ENCODE measurements at regions of chr6 and their contacts with region 1.

Region 1: DNA sequence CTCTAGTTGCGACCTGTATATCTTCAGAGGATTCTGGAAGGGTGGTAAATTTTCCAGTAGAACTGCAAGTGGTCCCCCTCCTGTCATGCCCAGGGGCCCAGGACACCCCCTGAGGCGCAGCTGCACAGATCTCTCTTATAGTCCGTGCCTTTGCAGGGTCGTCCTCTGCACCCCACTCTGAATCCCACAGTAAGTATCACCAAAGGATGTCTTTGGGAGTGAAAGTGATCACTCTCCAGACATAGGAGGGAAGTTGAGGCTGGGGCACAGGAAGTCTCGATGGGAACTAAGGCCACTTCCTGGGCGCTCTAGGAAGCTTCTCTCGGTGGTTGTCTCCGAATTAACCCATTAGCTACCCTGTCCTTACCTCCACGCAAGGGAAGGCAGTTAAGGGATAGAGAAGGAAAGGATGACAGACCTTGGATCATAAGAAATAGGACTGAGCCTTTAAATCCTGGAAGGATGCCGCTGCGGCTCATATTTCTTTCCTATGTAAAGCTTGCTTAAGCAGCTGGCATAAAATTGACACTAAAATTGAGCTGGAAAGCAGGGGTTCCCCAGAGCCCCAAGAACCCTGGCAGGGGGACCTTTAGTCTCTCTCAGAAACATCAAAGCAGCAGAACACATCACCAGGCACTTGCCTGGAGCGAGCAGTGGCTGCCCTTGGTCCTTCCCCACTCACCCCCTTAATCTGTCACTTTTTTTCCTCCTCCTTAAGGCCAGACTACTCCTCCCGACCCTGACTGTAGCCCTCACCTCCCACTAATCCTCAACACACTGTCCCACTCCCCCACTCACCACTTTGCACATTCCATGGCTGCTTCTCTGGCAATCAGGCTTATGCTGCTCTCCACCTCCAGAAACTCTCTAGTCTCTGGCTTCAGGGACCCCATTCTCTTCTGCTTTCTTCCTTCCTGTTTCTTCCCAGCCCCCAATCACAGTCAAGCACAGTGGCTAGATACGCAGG is at the start of gene ZKSCAN4:
- DNase-seq: peak; percentile 88
- ATAC-seq: peak; percentile 94
- H3K4me3 ChIP-seq: peak within 1 kb of the TSS; percentile 85 to 98 (median 97)
- H3K27ac ChIP-seq: peak within 1 kb of the TSS; percentile 30
- H3K4me1 ChIP-seq: peaks cover 27% of the 10 kb centered on the region
- H3K27me3 ChIP-seq: no peaks in the 10 kb centered on the region; a peak in 1 of 5 replicates
- CTCF ChIP-seq: no peak
- EP300 ChIP-seq: peak in 1 of 2 experiments; percentile 56; a peak in 1 of 4 replicates
- POLR2A ChIP-seq: peak; percentile 42 to 74; a peak in 3 of 4 replicates
- RAD21 ChIP-seq: no peak; the same call in 1 of the 2 replicates
- total RNA-seq, gene ZKSCAN4: 7.8 and 10.2 TPM in 2 replicates

Region 2: GRCh38 chr6:28090917-28091586 is 161.2 kb before region 1 on chr6:
- CTCF ChIA-PET with region 1: no interaction called
- POLR2A ChIA-PET with region 1: no interaction called
- in situ Hi-C with region 1: no loop called
- intact Hi-C with region 1: no loop called
- DNase-seq: no peak
- ATAC-seq: no peak
- H3K4me3 ChIP-seq: no peak overlapping the region
- H3K27ac ChIP-seq: no peak overlapping the region
- H3K4me1 ChIP-seq: no peaks in the 10 kb centered on the region
- H3K27me3 ChIP-seq: no peaks in the 10 kb centered on the region
- CTCF ChIP-seq: no peak
- EP300 ChIP-seq: no peak
- POLR2A ChIP-seq: no peak
- RAD21 ChIP-seq: no peak

Region 3: DNA sequence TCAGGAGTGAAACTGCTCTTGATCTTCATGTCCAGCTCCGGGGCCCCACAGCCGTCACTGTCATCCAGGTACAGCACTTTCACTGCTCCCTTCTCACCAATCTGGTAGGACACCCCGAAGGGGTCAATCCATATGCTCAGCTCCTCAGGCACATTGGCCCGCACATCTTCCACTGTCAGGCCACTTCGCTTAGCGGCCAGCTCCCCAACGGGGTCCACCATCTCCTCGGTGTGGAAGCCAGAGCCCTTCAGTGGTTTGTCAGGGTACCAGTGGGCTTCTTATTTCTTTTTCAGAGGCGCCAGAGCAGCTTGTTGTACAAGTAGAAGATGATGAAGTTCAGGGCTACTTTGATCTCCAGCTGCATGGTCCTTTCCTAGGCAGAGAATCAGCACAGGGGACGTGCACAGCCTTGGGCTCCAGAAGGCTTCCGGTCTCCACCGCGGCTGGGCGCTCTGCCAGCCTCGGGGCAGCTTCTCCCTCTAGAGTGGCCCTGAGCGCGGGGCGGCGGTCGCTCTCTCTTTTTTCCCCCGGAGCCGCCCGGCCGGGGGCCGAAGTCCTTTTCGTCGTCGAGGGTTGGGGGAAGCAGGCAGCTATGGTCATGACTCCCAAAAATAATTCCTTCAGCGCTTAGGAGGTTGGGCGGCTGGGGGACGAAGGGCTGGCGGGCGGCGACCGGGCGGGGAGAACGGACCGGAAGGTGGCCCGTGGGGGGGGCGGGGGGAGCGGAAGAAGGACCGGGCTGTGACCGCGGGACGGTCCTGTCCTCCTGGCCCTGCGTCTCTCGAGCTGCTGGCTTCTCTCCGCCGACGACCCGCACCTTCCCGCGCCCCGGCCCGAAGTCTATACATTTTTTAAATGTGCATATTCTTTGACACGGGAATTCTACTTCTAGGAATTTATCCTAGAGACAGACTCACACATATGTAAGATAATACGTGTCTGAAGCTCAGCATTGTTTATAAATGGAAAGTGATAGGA is 33.7 kb before region 1 on chr6:
- CTCF ChIA-PET with region 1: no interaction called
- POLR2A ChIA-PET with region 1: interaction called, 20 read pairs
- in situ Hi-C with region 1: no loop called
- intact Hi-C with region 1: no loop called
- DNase-seq: peak; percentile 70
- ATAC-seq: peak; percentile 93
- H3K4me3 ChIP-seq: peak overlapping the region; percentile 53 to 77 (median 56)
- H3K27ac ChIP-seq: peak overlapping the region; percentile 79
- H3K4me1 ChIP-seq: peaks cover 55% of the 10 kb centered on the region
- H3K27me3 ChIP-seq: no peaks in the 10 kb centered on the region; a peak in 1 of 5 replicates
- CTCF ChIP-seq: peak; percentile 49
- EP300 ChIP-seq: no peak
- POLR2A ChIP-seq: peak; percentile 42 to 77; a peak in 2 of 4 replicates
- RAD21 ChIP-seq: peak; percentile 50

Region 4: GRCh38 chr6:28225056-28225834 is 27.0 kb before region 1 on chr6 and contains the start of gene ZSCAN9:
- CTCF ChIA-PET with region 1: no interaction called
- POLR2A ChIA-PET with region 1: interaction called, 6 read pairs
- in situ Hi-C with region 1: no loop called
- intact Hi-C with region 1: loop called (anchors 1 kb)
- DNase-seq: peak; percentile 86
- ATAC-seq: peak; percentile 97
- H3K4me3 ChIP-seq: peak within 1 kb of the TSS; percentile 91 to 99 (median 99)
- H3K27ac ChIP-seq: peak within 1 kb of the TSS; percentile 55
- H3K4me1 ChIP-seq: peaks cover 24% of the 10 kb centered on the region
- H3K27me3 ChIP-seq: no peaks in the 10 kb centered on the region; a peak in 2 of 5 replicates
- CTCF ChIP-seq: peak; percentile 35
- EP300 ChIP-seq: no peak
- POLR2A ChIP-seq: peak; percentile 79 to 81
- RAD21 ChIP-seq: peak; percentile 45; the same call in 1 of the 2 replicates
- total RNA-seq, gene ZSCAN9: 17.2 and 17.8 TPM in 2 replicates

Region 5: DNA sequence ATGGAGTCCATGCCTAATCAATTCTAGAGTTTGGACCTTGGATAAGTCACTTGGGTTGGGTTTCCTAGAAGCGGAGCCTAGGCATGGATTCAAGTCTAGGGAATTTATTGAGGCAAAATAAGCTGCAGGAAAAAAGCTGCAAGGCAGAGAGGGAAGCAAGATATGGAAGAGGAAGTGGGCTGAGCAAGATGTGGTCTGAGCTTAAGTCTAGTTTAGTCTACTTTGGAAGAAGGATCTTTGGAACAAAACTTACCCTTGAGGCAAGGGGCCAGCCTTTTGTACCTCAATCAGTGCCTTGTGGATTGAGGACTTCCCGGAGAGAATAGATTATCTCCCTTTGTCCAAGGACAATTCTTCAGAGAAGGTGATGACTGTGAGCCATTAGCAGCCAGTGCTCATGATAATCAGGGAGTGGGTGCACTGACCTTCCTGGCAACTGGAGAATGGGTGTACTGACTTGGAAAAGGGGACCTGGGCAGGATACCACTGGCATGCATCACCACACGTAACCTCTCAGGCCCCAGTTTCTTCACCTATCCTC is 16.3 kb before region 1 on chr6:
- CTCF ChIA-PET with region 1: no interaction called
- POLR2A ChIA-PET with region 1: no interaction called
- in situ Hi-C with region 1: no loop called
- intact Hi-C with region 1: no loop called
- DNase-seq: no peak
- ATAC-seq: no peak
- H3K4me3 ChIP-seq: no peak overlapping the region
- H3K27ac ChIP-seq: no peak overlapping the region
- H3K4me1 ChIP-seq: no peaks in the 10 kb centered on the region
- H3K27me3 ChIP-seq: no peaks in the 10 kb centered on the region
- CTCF ChIP-seq: no peak
- EP300 ChIP-seq: no peak
- POLR2A ChIP-seq: no peak
- RAD21 ChIP-seq: no peak

Region 6: DNA sequence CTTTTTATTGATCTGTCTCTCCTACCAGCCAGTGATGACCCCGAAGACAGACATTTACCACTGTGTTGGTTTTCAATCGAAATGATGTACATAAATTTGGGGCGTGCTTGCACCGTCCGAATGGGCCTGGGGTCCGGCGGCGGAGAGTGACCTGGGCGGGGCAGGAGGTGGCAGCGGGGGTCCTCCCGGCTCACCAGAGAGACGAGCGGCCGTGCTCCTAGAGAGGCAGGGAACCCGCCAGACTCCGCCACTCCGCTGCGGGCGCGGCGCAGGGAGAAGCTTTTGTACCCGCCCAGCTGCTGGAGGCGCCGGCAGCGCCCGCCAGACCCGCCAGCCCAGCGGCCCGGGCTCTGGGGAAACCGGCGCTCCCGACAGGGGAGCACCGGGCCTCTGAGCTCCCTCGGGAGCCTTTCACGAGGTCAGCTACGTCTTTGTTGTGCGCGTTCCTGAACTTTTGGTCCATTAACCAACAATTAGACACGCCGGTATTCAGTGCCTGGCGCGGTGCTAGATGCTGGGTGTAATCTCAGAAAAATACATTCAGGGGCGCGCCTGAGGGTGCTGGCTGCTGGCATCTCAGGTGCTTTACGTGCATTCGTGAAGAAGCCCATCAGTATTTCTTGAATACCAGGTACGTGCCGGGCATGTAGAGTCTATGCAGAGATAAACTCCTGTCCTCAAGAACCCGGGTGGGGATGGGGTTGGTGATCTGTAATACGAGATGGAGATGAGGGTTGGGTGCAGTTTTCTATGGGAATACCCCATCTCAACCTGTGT is 29.2 kb after region 1 on chr6 and contains the start of gene PGBD1:
- CTCF ChIA-PET with region 1: no interaction called
- POLR2A ChIA-PET with region 1: interaction called, 5 read pairs
- in situ Hi-C with region 1: no loop called
- intact Hi-C with region 1: loop called (anchors 1 kb)
- DNase-seq: peak; percentile 67
- ATAC-seq: peak; percentile 99
- H3K4me3 ChIP-seq: peak within 1 kb of the TSS; percentile 79 to 94 (median 89)
- H3K27ac ChIP-seq: peak within 1 kb of the TSS; percentile 42
- H3K4me1 ChIP-seq: peaks cover 16% of the 10 kb centered on the region
- H3K27me3 ChIP-seq: no peaks in the 10 kb centered on the region; a peak in 1 of 5 replicates
- CTCF ChIP-seq: peak; percentile 39
- EP300 ChIP-seq: peak in 1 of 2 experiments; percentile 5; a peak in 1 of 4 replicates
- POLR2A ChIP-seq: peak; percentile 71 to 72
- RAD21 ChIP-seq: peak; percentile 76
- total RNA-seq, gene PGBD1: 6.9 and 8.5 TPM in 2 replicates

Region 7: GRCh38 chr6:28335564-28336283 is 83.4 kb after region 1 on chr6 and contains the start of gene ZSCAN31:
- CTCF ChIA-PET with region 1: no interaction called
- POLR2A ChIA-PET with region 1: interaction called, 16 read pairs
- in situ Hi-C with region 1: no loop called
- intact Hi-C with region 1: no loop called
- DNase-seq: peak; percentile 99
- ATAC-seq: peak; percentile 98
- H3K4me3 ChIP-seq: peak within 1 kb of the TSS; percentile 78 to 94 (median 80)
- H3K27ac ChIP-seq: peak within 1 kb of the TSS; percentile 96
- H3K4me1 ChIP-seq: peaks cover 25% of the 10 kb centered on the region
- H3K27me3 ChIP-seq: no peaks in the 10 kb centered on the region; a peak in 1 of 5 replicates
- CTCF ChIP-seq: no peak; the same call in 1 of the 2 replicates
- EP300 ChIP-seq: peak; percentile 18 to 34; a peak in 1 of 4 replicates
- POLR2A ChIP-seq: peak; percentile 80 to 99
- RAD21 ChIP-seq: 0 out of 2 replicates have a peak, but pooled peaks have one; percentile 17
- total RNA-seq, gene ZSCAN31: 6.2 and 7.2 TPM in 2 replicates

Region 8: DNA sequence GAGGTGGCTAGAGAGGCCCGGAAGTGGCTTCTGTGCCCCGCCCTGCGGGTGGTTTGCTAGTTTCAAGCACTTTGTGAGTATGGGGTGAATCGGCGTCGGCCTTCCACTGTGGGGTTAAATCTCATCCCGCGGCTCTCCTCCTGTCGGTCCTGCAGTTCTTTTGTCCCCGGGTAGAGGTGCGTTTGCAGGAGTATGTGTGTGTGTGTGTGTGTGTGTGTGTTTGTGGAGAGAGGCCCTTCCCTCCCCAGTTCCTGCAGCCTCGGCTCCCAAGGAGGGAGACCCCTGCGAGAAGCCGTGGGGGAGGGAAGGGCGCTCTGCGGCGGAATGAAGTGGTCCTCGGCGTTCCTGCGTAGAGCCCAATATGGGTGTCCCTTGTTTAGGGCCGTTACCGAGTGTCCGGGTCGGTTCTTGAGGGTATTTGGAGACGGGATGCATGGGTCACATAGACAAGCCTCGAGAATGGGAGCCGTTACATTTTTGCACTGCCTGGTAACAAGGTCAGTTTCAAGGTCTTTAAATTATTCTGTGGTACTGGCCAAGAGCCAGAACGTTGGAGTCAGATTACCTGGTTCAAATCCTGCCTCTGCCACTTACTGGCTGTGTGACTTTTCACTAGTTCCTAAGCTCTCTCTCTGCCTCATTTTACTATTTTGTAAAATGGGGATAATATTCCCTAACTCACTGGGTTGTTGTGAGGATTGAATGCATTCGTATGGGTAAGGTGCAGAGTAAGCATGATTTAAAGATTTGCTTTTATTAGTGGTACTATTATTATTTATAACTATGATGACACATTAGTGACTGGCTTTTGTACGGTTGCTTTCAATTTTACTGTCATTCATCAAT is 97.8 kb after region 1 on chr6 and contains the start of gene ZKSCAN3:
- CTCF ChIA-PET with region 1: no interaction called
- POLR2A ChIA-PET with region 1: interaction called, 19 read pairs
- in situ Hi-C with region 1: no loop called
- intact Hi-C with region 1: loop called (anchors 1 kb)
- DNase-seq: peak; percentile 84
- ATAC-seq: peak; percentile 97
- H3K4me3 ChIP-seq: peak within 1 kb of the TSS; percentile 63 to 98 (median 85)
- H3K27ac ChIP-seq: peak within 1 kb of the TSS; percentile 77
- H3K4me1 ChIP-seq: peaks cover 32% of the 10 kb centered on the region
- H3K27me3 ChIP-seq: no peaks in the 10 kb centered on the region; a peak in 1 of 5 replicates
- CTCF ChIP-seq: 0 out of 2 replicates have a peak, but pooled peaks have one; percentile 19
- EP300 ChIP-seq: no peak
- POLR2A ChIP-seq: peak; percentile 81 to 88
- RAD21 ChIP-seq: peak; percentile 27; the same call in 1 of the 2 replicates
- total RNA-seq, gene ZKSCAN3: 7.4 and 8.1 TPM in 2 replicates

Region 9: DNA sequence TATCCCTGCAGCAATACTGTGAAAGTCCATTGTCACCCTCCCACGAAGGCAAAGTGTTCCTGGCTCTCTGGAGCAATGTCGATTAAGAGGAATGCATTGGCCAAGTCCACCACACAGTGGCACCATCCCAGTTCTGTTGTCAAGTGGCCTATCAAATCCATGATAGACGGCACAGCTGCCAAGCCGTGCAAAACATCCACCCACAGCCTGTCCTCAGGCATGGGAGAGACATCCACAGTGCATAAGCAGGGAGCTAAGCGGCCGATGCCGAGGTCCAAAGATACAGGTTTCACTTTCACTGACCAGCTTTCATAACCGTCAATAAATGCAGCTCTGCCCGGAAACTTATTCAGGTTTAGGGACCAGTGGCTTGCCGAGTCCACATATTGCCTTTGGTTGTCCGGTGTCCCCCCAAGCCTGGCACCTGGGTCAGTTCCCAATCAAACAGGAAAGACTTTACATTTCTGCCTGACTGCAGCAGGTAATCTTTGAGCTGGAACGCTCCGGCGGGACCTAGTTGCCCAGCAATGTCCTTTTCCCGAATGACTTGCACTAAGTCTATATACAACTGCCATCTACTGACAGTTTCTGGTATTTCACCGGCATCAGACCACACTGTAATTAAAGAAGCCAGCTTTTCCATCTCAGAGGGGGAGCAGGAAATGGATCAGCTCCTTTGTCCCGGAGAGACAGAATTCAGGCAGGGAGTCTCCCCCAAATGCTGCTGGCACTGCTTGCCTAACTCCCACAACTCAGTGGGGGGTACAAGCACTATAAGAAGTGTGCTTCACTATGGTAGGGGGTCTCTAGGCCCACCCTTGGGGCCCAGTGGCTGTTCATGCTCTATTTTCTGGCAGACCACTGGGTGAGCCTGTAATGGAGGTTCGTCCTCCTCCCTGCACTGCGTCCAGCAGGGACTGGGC is 103.7 kb after region 1 on chr6:
- CTCF ChIA-PET with region 1: no interaction called
- POLR2A ChIA-PET with region 1: interaction called, 19 read pairs
- in situ Hi-C with region 1: no loop called
- intact Hi-C with region 1: loop called (anchors 1 kb)
- DNase-seq: peak; percentile 90
- ATAC-seq: peak; percentile 89
- H3K4me3 ChIP-seq: peak overlapping the region; percentile 70 to 82 (median 77)
- H3K27ac ChIP-seq: peak overlapping the region; percentile 75
- H3K4me1 ChIP-seq: peaks cover 33% of the 10 kb centered on the region
- H3K27me3 ChIP-seq: no peaks in the 10 kb centered on the region; a peak in 1 of 5 replicates
- CTCF ChIP-seq: peak; percentile 91
- EP300 ChIP-seq: no peak
- POLR2A ChIP-seq: peak in 1 of 2 experiments; percentile 65; a peak in 1 of 4 replicates
- RAD21 ChIP-seq: peak; percentile 81

Measured in HepG2 (cell line).